ENCODE measurements at regions of chr2 and their contacts with region 1.

Region 1: GRCh38 chr2:120552800-120553481 is 182.7 kb upstream of the GLI2 start:
- DNase-seq: peak; percentile 78 to 87
- ATAC-seq: peak; percentile 97 to 99
- H3K4me3 ChIP-seq: no peak overlapping the region
- H3K27ac ChIP-seq: peak overlapping the region; percentile 3 to 42; a peak in 2 of 6 replicates
- H3K4me1 ChIP-seq: peaks cover 5% of the 10 kb centered on the region
- CTCF ChIP-seq: peak; percentile 73
- EP300 ChIP-seq: no peak
- POLR2A ChIP-seq: no peak
- RAD21 ChIP-seq: peak; percentile 72 to 77

Region 2: DNA sequence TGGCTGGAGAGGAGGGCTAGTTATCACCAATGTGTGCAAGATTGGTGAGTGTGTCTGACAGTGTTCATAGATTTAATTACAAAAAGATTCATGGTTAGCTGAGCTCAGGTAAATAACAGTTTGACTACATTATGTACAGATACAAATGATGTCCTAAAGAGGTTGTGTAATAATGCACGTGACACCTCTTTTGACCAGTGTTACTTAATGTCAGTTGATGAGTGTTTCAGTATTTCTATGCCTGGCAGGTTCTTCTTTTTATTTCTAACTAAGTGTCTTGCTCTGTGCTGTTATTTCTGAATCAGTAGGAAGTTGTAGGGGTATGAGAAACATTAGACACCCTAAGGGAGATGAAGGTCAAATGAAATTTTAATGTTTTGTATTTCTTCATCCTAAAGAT is 214.9 kb before region 1 on chr2:
- CTCF ChIA-PET with region 1: interaction called, 101 read pairs
- POLR2A ChIA-PET with region 1: interaction called, 4 read pairs
- DNase-seq: no peak
- ATAC-seq: no peak
- H3K4me3 ChIP-seq: no peak overlapping the region
- H3K27ac ChIP-seq: no peak overlapping the region
- H3K4me1 ChIP-seq: peaks cover 2% of the 10 kb centered on the region
- CTCF ChIP-seq: no peak
- EP300 ChIP-seq: no peak
- POLR2A ChIP-seq: no peak
- RAD21 ChIP-seq: no peak

Region 3: DNA sequence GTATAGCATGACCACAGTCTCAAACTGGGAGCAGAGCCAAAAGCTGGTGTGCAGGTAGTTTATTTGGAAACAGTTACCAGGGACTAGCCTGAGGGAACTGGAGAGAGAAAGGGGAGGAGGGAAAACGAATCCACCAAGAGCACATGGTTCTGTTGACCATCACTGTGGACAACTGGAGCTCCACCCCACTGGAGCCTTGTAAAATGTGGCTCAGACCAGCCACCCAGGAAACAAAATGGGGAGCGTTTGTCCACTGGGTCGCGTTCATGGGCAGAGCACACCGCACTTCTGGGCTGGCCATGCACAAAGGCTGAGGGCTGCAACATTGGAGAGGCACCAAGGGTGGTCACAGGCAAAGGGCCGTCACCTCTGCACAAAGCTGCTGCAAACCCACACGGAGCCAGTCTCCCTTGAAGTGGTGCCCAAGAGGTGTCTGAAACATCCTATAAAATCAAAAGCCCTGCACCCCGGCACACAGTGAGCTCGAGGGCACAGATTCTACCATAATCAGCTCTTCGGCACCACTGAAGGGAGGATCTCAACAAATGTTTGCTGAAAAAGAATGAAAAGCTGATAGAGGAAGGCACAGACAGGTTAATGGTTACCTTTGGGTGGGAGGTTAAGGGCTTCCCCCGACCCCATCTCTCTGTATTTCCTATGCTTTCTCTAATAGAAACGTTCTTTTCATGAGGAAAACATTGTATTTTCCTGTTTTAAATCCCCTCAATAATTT is 14.1 kb before region 1 on chr2:
- CTCF ChIA-PET with region 1: interaction called, 19 read pairs
- POLR2A ChIA-PET with region 1: no interaction called
- DNase-seq: no peak
- ATAC-seq: no peak
- H3K4me3 ChIP-seq: no peak overlapping the region
- H3K27ac ChIP-seq: no peak overlapping the region; a peak in 1 of 6 replicates
- H3K4me1 ChIP-seq: peaks cover 20% of the 10 kb centered on the region
- CTCF ChIP-seq: no peak
- EP300 ChIP-seq: no peak
- POLR2A ChIP-seq: no peak
- RAD21 ChIP-seq: no peak

Region 4: DNA sequence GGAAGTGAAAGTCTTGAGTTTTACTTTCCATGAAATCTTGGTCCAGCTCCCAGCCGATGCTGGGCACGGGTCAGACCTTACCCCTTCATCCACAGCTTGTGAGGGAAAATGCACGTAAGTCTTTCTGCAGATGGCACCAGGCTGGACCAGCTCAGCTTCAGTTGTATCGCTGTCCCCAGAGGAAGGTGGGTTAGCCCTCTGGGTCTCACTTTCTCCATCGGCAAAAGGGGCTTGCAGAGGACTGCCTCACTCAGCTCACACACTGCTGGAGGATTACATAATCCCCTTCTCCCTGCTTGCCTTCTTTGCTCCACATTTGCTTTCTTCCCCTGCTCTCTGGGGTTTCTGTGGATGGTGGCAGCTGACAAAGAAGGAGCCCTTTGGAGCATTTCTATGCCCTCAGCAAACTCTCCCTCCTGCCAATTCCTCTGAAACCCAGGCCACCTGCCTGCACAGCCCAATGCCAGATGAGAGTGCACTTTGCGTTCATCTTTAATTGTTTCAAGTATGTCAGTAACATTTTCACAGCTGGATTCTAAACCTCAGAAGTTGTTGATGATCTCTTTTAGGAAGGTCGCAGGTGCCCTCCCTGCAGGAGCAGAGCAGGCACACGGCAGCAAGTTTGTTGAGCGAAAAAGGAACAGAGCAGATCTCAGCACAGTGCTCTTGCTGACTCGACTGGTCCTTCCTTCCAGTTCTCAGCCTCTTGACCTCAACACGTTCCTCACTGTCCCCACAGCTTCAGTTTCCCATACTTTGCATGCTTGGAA is 27.2 kb after region 1 on chr2:
- CTCF ChIA-PET with region 1: interaction called, 10 read pairs
- POLR2A ChIA-PET with region 1: no interaction called
- DNase-seq: no peak
- ATAC-seq: no peak
- H3K4me3 ChIP-seq: no peak overlapping the region
- H3K27ac ChIP-seq: no peak overlapping the region
- H3K4me1 ChIP-seq: no peaks in the 10 kb centered on the region
- CTCF ChIP-seq: no peak
- EP300 ChIP-seq: no peak
- POLR2A ChIP-seq: no peak
- RAD21 ChIP-seq: no peak

Measured in A549 (cell line).